ENCODE measurements at regions of chr20 and their contacts with region 1.

Region 1: GRCh38 chr20:17759241-17759848 is 59.6 kb downstream of the BANF2 start:
- DNase-seq: no peak
- ATAC-seq: peak; percentile 58 to 85 (median 78)
- H3K4me3 ChIP-seq: no peak overlapping the region
- H3K27ac ChIP-seq: peak overlapping the region in 1 of 12 donors; percentile 14
- H3K4me1 ChIP-seq: peaks cover 0 to 7% (median 0%) of the 10 kb centered on the region in 12 donors
- H3K27me3 ChIP-seq: no peaks in the 10 kb centered on the region
- CTCF ChIP-seq: no peak
- POLR2A ChIP-seq: no peak

Region 2: GRCh38 chr20:17688965-17689364 is 70.4 kb before region 1 on chr20:
- intact Hi-C with region 1: loop called in 2 of 10 experiments (anchors 5 to 10 kb)
- DNase-seq: no peak
- ATAC-seq: no peak
- H3K4me3 ChIP-seq: no peak overlapping the region
- H3K27ac ChIP-seq: no peak overlapping the region
- H3K4me1 ChIP-seq: no peaks in the 10 kb centered on the region
- H3K27me3 ChIP-seq: no peaks in the 10 kb centered on the region
- CTCF ChIP-seq: no peak
- POLR2A ChIP-seq: no peak

Measured in heart left ventricle (tissue), 16 donors.